ENCODE measurements at regions of chr3 and their contacts with region 1.

Region 1: DNA sequence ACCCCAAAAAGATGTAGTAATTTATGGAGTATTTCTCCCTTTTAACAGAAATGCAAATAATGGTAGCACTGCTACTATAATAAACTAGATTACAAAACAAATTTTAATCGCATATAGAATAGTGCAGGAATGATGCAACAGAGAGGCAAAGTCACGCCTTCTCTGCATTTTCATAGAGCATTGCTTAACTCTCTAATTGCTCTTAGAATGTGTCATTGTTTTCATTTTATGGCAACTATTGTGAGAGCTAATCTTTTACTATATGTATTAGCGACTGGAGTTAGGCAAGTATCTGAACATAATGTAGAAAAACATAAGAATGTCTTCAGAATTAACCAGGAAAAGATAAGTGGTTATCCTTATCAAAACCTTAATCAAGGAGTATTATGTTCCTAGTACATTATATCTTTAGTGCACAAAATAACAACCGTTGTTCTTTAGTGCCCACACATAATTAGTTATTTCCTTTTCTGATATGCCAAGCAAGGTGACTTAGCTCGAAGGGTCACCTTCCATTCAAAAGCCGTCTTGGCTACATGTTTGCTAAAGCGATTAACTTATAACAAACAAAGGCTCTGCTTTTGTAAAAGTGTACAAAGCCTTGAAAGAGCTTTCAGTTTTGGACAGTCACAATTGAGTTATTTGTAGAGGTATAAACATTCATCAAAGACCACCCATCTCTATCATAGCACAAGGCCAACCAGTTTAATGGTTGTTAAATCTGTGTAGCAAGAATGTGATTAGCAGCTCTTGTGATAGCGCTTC is 1328.9 kb downstream of the ROBO2 start:
- DNase-seq: no peak
- H3K4me3 ChIP-seq: no peak overlapping the region
- H3K27ac ChIP-seq: no peak overlapping the region
- H3K4me1 ChIP-seq: no peaks in the 10 kb centered on the region
- H3K27me3 ChIP-seq: no peaks in the 10 kb centered on the region
- CTCF ChIP-seq: no peak
- EP300 ChIP-seq: no peak
- POLR2A ChIP-seq: no peak

Region 2: GRCh38 chr3:78338405-78338804 is 30.4 kb before region 1 on chr3:
- in situ Hi-C with region 1: no loop called
- intact Hi-C with region 1: loop called (anchors 1 kb)
- DNase-seq: no peak
- H3K4me3 ChIP-seq: no peak overlapping the region
- H3K27ac ChIP-seq: no peak overlapping the region
- H3K4me1 ChIP-seq: no peaks in the 10 kb centered on the region
- H3K27me3 ChIP-seq: no peaks in the 10 kb centered on the region
- CTCF ChIP-seq: no peak
- EP300 ChIP-seq: no peak
- POLR2A ChIP-seq: no peak

Region 3: GRCh38 chr3:78483090-78483489 is 114.3 kb after region 1 on chr3:
- in situ Hi-C with region 1: no loop called
- intact Hi-C with region 1: no loop called
- DNase-seq: no peak
- H3K4me3 ChIP-seq: no peak overlapping the region
- H3K27ac ChIP-seq: no peak overlapping the region
- H3K4me1 ChIP-seq: no peaks in the 10 kb centered on the region
- H3K27me3 ChIP-seq: no peaks in the 10 kb centered on the region
- CTCF ChIP-seq: no peak
- EP300 ChIP-seq: no peak
- POLR2A ChIP-seq: no peak

Measured in transverse colon (tissue), 4 donors.